Adrenal gland (tissue), 19 donors: ENCODE measurements at regions of chr6 and their contacts with region 1.

Region 1: GRCh38 chr6:109187399-109188114 is 92.2 kb downstream of the CEP57L1 start:
- DNase-seq: peak in 6 of 7 donors; percentile 34 to 69 (median 39)
- H3K4me3 ChIP-seq: no peak overlapping the region
- H3K27ac ChIP-seq: no peak overlapping the region
- H3K4me1 ChIP-seq: peaks cover 0 to 5% of the 10 kb centered on the region in 2 donors
- H3K27me3 ChIP-seq: no peaks in the 10 kb centered on the region
- CTCF ChIP-seq: peak; percentile 72 to 93 (median 86)
- POLR2A ChIP-seq: no peak

Region 2: DNA sequence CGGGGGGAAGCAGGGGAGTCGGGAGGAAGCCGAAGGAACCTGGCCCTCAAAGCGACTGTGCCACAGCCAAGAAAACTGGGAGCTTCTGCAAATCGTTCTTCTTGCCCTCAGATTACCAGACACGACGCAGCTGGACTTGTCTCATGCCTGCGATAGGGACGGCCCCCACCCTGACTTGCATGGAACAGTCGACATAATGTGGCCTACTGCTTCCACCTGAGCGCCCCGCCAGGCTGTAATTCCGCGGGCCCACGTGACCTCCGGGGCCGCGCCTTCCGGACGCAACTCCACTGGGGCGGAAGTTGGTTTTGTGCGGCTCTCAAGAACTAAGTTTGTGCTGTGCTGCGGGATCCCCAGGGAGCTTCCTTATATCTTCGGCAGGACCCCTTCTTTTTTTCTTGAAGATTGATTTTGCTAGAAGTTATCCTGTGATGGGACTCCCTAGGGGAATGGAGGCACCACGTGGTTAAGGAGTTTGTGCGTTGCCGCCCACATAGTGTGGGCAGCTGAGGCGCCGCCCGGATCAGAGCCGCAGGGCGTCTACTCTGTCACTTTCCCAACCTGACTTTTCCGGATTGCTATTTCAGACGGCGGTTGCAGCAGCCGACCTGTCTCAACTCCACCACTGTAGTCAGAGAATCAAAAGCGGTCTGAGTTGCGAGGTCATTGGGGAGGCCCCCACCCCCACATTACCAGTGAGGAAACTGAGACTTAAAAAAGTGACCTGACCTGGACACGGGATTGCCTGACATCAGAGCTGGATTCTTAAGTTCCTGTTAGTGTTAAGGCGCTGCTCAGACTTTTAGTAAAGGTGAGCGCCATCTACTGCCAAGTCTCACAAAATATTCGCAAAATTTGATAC is 195.2 kb after region 1 on chr6:
- intact Hi-C with region 1: loop called in 1 of 2 experiments (anchors 5 kb)
- DNase-seq: peak; percentile 91 to 95 (median 93)
- H3K4me3 ChIP-seq: peak overlapping the region; percentile 84 to 97 (median 94)
- H3K27ac ChIP-seq: peak overlapping the region; percentile 95 to 100 (median 99)
- H3K4me1 ChIP-seq: peaks cover 24 to 34% of the 10 kb centered on the region in 2 donors
- H3K27me3 ChIP-seq: no peaks in the 10 kb centered on the region
- CTCF ChIP-seq: peak; percentile 25 to 65 (median 54)
- POLR2A ChIP-seq: peak; percentile 65 to 75

Region 3: GRCh38 chr6:109397020-109397419 is 209.5 kb after region 1 on chr6:
- intact Hi-C with region 1: loop called in 1 of 2 experiments (anchors 5 kb)
- DNase-seq: peak in 1 of 7 donors; percentile 21
- H3K4me3 ChIP-seq: no peak overlapping the region
- H3K27ac ChIP-seq: no peak overlapping the region
- H3K4me1 ChIP-seq: no peaks in the 10 kb centered on the region
- H3K27me3 ChIP-seq: no peaks in the 10 kb centered on the region
- CTCF ChIP-seq: peak in 5 of 6 experiments; percentile 33 to 54 (median 45)
- POLR2A ChIP-seq: no peak